Calu3 (cell line): ENCODE measurements at regions of chr13 and their contacts with region 1.

Region 1: GRCh38 chr13:45464687-45465453 is at the start of gene COG3:
- DNase-seq: peak; percentile 92
- H3K4me3 Mint-ChIP-seq: peak within 1 kb of the TSS; percentile 85
- H3K27ac Mint-ChIP-seq: peak within 1 kb of the TSS; percentile 81
- H3K4me1 Mint-ChIP-seq: peaks cover 11% of the 10 kb centered on the region
- H3K27me3 Mint-ChIP-seq: no peaks in the 10 kb centered on the region
- CTCF ChIP-seq: no peak
- total RNA-seq, gene COG3: 18.4 and 21.6 TPM in 2 replicates

Region 2: GRCh38 chr13:45417790-45418534 is 46.9 kb before region 1 on chr13 and contains the start of gene SLC25A30:
- CTCF ChIA-PET with region 1: no interaction called
- intact Hi-C with region 1: loop called (anchors 5 kb)
- DNase-seq: peak; percentile 90
- H3K4me3 Mint-ChIP-seq: peak within 1 kb of the TSS; percentile 80
- H3K27ac Mint-ChIP-seq: peak within 1 kb of the TSS; percentile 92
- H3K4me1 Mint-ChIP-seq: peaks cover 7% of the 10 kb centered on the region
- H3K27me3 Mint-ChIP-seq: no peaks in the 10 kb centered on the region
- CTCF ChIP-seq: no peak
- total RNA-seq, gene SLC25A30: 16.6 and 18.2 TPM in 2 replicates

Region 3: GRCh38 chr13:45500492-45501174 is 35.8 kb after region 1 on chr13:
- CTCF ChIA-PET with region 1: no interaction called
- intact Hi-C with region 1: no loop called
- DNase-seq: peak; percentile 19
- H3K4me3 Mint-ChIP-seq: peak overlapping the region; percentile 34
- H3K27ac Mint-ChIP-seq: peak overlapping the region; percentile 86
- H3K4me1 Mint-ChIP-seq: peaks cover 8% of the 10 kb centered on the region
- H3K27me3 Mint-ChIP-seq: no peaks in the 10 kb centered on the region
- CTCF ChIP-seq: no peak